Endothelial cell of umbilical vein (primary cell): ENCODE measurements at regions of chr12 and their contacts with region 1.

Region 1: GRCh38 chr12:121230538-121230907 is 20.6 kb downstream of the P2RX4 start:
- DNase-seq: no peak
- H3K4me3 ChIP-seq: no peak overlapping the region
- H3K27ac ChIP-seq: no peak overlapping the region
- H3K4me1 ChIP-seq: no peaks in the 10 kb centered on the region
- H3K27me3 ChIP-seq: no peaks in the 10 kb centered on the region
- CTCF ChIP-seq: no peak
- POLR2A ChIP-seq: no peak

Region 2: DNA sequence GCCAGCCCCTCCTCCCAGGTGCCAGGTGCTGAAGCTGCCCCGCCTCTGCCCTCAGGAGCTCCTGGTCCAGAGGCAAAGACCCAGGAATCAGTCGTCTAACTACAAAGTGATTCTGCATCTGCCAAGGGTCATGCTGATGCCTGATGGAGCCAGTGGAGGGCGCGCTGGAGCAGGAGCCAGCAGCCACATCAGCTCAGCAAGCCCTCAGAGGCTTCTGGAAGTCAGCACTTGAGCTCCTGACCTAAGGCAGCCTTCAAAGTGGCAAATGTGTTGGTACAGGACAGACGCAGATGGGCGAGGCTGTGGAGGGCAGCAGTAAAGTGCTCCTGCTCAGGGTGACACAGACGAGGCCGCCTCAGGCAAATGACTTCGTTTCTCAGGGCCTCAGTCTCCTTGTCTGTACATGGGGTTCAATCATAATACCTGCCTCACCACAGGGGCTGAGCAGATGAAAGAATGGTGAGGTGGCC is 225.1 kb before region 1 on chr12:
- CTCF ChIA-PET with region 1: no interaction called
- POLR2A ChIA-PET with region 1: no interaction called
- dilution Hi-C with region 1: no loop called
- intact Hi-C with region 1: loop called (anchors 1 kb)
- DNase-seq: peak; percentile 61
- H3K4me3 ChIP-seq: no peak overlapping the region
- H3K27ac ChIP-seq: no peak overlapping the region
- H3K4me1 ChIP-seq: no peaks in the 10 kb centered on the region
- H3K27me3 ChIP-seq: no peaks in the 10 kb centered on the region
- CTCF ChIP-seq: peak; percentile 78 to 89
- POLR2A ChIP-seq: no peak

Region 3: GRCh38 chr12:121248622-121249021 is 18.1 kb after region 1 on chr12:
- CTCF ChIA-PET with region 1: no interaction called
- POLR2A ChIA-PET with region 1: no interaction called
- dilution Hi-C with region 1: no loop called
- intact Hi-C with region 1: no loop called
- DNase-seq: no peak
- H3K4me3 ChIP-seq: no peak overlapping the region
- H3K27ac ChIP-seq: no peak overlapping the region
- H3K4me1 ChIP-seq: no peaks in the 10 kb centered on the region
- H3K27me3 ChIP-seq: no peaks in the 10 kb centered on the region
- CTCF ChIP-seq: no peak
- POLR2A ChIP-seq: no peak

Region 4: DNA sequence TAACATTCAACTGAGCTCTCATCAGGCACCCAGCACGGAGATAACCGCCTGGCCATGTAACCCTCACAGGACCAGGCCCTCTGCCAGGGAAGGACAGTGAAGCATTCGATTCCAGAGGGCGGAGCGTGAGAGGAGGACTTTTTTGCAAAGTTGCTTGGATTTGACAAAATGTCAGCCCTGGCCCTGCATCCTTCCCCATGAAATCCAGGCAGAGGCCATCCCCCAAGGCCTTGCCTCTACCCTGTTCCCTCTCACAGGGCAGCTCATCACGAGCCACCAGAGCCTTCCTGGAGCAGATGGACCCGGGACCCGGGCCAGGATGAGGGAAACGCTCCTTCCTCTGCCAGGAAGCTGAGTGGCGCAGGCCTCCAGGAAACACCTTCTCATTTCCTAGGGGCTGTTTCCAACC is 49.0 kb after region 1 on chr12:
- CTCF ChIA-PET with region 1: no interaction called
- POLR2A ChIA-PET with region 1: no interaction called
- dilution Hi-C with region 1: no loop called
- intact Hi-C with region 1: loop called (anchors 2 kb)
- DNase-seq: peak; percentile 61
- H3K4me3 ChIP-seq: no peak overlapping the region
- H3K27ac ChIP-seq: peak overlapping the region; percentile 65
- H3K4me1 ChIP-seq: peaks cover 27% of the 10 kb centered on the region
- H3K27me3 ChIP-seq: no peaks in the 10 kb centered on the region
- CTCF ChIP-seq: no peak
- POLR2A ChIP-seq: no peak